ENCODE measurements at regions of chr2 and their contacts with region 1.

Region 1: GRCh38 chr2:65432227-65433190 is at the start of gene SPRED2:
- DNase-seq: peak in 8 of 9 experiments; percentile 37 to 88 (median 64)
- ATAC-seq: peak; percentile 34
- H3K4me3 ChIP-seq: peak within 1 kb of the TSS; percentile 81 to 91
- H3K4me3 Mint-ChIP-seq: peak within 1 kb of the TSS; percentile 88
- H3K27ac ChIP-seq: peak within 1 kb of the TSS in 1 of 2 experiments; percentile 31
- H3K27ac Mint-ChIP-seq: peak within 1 kb of the TSS; percentile 29
- H3K4me1 ChIP-seq: peaks cover 32% of the 10 kb centered on the region
- H3K4me1 Mint-ChIP-seq: peaks cover 22% of the 10 kb centered on the region
- H3K27me3 ChIP-seq: peaks cover 18 to 31% of the 10 kb centered on the region in 2 experiments
- H3K27me3 Mint-ChIP-seq: peaks cover 38% of the 10 kb centered on the region
- CTCF ChIP-seq: no peak
- total RNA-seq, gene SPRED2: 2.3 to 2.5 TPM

Region 2: GRCh38 chr2:63834401-63834800 is 1598.1 kb before region 1 on chr2:
- CTCF ChIA-PET with region 1: no interaction called
- POLR2A ChIA-PET with region 1: no interaction called
- intact Hi-C with region 1: loop called in 1 of 2 experiments (anchors 10 kb)
- DNase-seq: no peak
- ATAC-seq: no peak
- H3K4me3 ChIP-seq: no peak overlapping the region
- H3K4me3 Mint-ChIP-seq: no peak overlapping the region
- H3K27ac ChIP-seq: no peak overlapping the region
- H3K27ac Mint-ChIP-seq: no peak overlapping the region
- H3K4me1 ChIP-seq: no peaks in the 10 kb centered on the region
- H3K4me1 Mint-ChIP-seq: no peaks in the 10 kb centered on the region
- H3K27me3 ChIP-seq: no peaks in the 10 kb centered on the region
- H3K27me3 Mint-ChIP-seq: peaks cover 2% of the 10 kb centered on the region
- CTCF ChIP-seq: no peak

Region 3: DNA sequence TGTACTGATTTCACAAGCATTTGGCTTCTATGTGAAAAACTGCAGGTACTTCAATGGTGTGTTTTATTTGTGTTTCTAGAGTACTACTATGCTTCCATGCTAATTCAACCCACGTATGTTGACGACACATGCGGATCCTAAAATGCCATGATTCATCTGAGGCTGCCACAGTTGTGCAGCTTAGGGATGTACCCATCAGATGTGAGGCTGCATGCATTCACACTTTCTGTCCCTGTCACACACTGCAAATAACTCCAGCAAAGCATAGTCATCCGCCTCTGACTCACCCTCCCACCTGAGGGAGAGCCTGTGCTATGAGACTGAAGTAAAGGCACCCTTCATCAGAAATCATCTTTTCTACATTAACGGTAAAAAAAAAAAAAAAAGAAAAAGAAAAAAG is 756.6 kb before region 1 on chr2:
- CTCF ChIA-PET with region 1: no interaction called
- POLR2A ChIA-PET with region 1: no interaction called
- intact Hi-C with region 1: no loop called
- DNase-seq: peak in 3 of 9 experiments; percentile 22 to 59 (median 42)
- ATAC-seq: peak; percentile 92
- H3K4me3 ChIP-seq: no peak overlapping the region
- H3K4me3 Mint-ChIP-seq: no peak overlapping the region
- H3K27ac ChIP-seq: no peak overlapping the region
- H3K27ac Mint-ChIP-seq: peak overlapping the region; percentile 37
- H3K4me1 ChIP-seq: peaks cover 25% of the 10 kb centered on the region
- H3K4me1 Mint-ChIP-seq: peaks cover 56% of the 10 kb centered on the region
- H3K27me3 ChIP-seq: no peaks in the 10 kb centered on the region
- H3K27me3 Mint-ChIP-seq: no peaks in the 10 kb centered on the region
- CTCF ChIP-seq: no peak

Region 4: DNA sequence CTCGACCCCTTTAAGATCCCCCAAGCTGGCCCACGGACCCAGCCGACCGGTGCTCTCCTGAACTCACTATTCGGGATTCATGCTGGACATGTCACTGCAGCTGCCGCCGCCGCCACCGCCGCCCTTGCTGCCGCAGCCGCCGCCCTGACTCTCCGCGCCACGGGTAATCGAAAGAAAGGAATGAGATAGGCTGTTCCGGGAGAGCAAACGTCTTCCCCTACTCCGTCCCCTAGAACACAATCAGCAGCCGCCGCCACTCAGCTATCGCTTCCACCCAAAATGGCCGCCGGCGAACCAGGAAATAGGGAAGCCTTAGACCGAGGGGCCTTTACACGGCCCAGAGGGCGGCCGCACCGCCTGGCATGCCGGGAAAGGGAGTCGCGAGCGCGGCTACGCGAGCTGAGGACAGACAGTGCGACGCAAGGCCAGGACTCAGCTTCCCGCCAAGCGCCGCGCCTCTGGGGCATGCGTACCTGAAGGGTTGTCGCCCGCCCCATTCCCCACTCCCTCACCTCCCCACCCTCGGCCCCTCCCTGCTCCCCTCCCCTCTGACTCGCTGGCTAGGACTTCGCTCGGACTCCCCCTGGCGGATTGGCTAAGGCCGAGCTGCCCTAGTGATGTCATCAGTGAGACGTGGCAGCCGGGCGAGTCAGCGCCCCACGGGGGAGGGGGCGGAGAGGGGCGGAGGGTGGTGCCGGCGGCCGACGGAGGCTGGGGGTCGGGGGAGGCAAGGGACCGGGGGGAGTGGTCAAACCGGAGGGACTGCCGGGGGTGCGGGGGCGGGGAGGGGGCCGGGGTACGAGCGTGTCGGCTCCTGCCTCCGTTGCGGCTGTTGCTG is 302.5 kb before region 1 on chr2 and contains the start of gene RAB1A:
- CTCF ChIA-PET with region 1: no interaction called
- POLR2A ChIA-PET with region 1: no interaction called
- intact Hi-C with region 1: loop called (anchors 5 kb)
- DNase-seq: peak; percentile 98 to 100 (median 99)
- ATAC-seq: peak; percentile 94
- H3K4me3 ChIP-seq: peak within 1 kb of the TSS; percentile 87 to 88
- H3K4me3 Mint-ChIP-seq: peak within 1 kb of the TSS; percentile 99
- H3K27ac ChIP-seq: peak within 1 kb of the TSS; percentile 91 to 97
- H3K27ac Mint-ChIP-seq: peak within 1 kb of the TSS; percentile 98
- H3K4me1 ChIP-seq: peaks cover 40% of the 10 kb centered on the region
- H3K4me1 Mint-ChIP-seq: peaks cover 44% of the 10 kb centered on the region
- H3K27me3 ChIP-seq: no peaks in the 10 kb centered on the region
- H3K27me3 Mint-ChIP-seq: no peaks in the 10 kb centered on the region
- CTCF ChIP-seq: no peak
- total RNA-seq, gene RAB1A: 101 to 103 TPM

Region 5: GRCh38 chr2:65264821-65265670 is 167.5 kb before region 1 on chr2:
- CTCF ChIA-PET with region 1: interaction called, 4 read pairs
- POLR2A ChIA-PET with region 1: no interaction called
- intact Hi-C with region 1: loop called in 1 of 2 experiments (anchors 10 kb)
- DNase-seq: peak in 2 of 9 experiments; percentile 55 to 68
- ATAC-seq: no peak
- H3K4me3 ChIP-seq: no peak overlapping the region
- H3K4me3 Mint-ChIP-seq: no peak overlapping the region
- H3K27ac ChIP-seq: no peak overlapping the region
- H3K27ac Mint-ChIP-seq: peak overlapping the region; percentile 66
- H3K4me1 ChIP-seq: no peaks in the 10 kb centered on the region
- H3K4me1 Mint-ChIP-seq: peaks cover 11% of the 10 kb centered on the region
- H3K27me3 ChIP-seq: no peaks in the 10 kb centered on the region
- H3K27me3 Mint-ChIP-seq: no peaks in the 10 kb centered on the region
- CTCF ChIP-seq: peak; percentile 75

Region 6: DNA sequence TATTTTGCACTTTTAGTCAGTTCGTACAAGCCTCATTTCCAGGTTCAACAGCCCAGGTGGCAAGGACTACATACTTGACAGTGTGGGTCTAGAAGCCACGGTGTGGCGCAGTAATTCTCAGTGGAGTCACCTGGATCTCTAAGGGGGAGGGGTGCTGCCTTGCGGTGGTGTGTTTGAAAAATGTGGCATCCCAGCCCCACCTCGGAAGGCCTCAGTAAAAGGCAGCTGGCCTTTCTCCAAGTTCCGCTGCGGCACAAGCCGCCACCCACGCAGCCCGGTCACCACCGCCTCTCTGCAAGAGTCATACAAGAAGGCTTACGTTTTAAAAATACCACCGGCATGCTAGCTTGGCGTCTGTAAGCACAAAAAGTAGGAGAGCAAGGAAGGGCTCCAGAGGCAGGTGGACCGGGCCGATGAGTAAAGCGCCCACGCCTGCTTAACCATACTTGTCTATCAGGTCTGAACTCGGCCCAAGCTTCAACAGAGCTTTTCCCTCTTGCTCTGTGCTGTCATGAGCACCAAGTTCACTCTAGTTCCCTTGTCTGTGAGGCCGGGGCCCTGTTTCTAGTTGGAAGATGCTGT is 49.6 kb before region 1 on chr2:
- CTCF ChIA-PET with region 1: interaction called, 3 read pairs
- POLR2A ChIA-PET with region 1: no interaction called
- intact Hi-C with region 1: loop called (anchors 1 to 2 kb)
- DNase-seq: peak; percentile 43 to 86 (median 77)
- ATAC-seq: peak; percentile 95
- H3K4me3 ChIP-seq: no peak overlapping the region
- H3K4me3 Mint-ChIP-seq: peak overlapping the region; percentile 61
- H3K27ac ChIP-seq: no peak overlapping the region
- H3K27ac Mint-ChIP-seq: peak overlapping the region; percentile 67
- H3K4me1 ChIP-seq: peaks cover 21% of the 10 kb centered on the region
- H3K4me1 Mint-ChIP-seq: peaks cover 29% of the 10 kb centered on the region
- H3K27me3 ChIP-seq: no peaks in the 10 kb centered on the region
- H3K27me3 Mint-ChIP-seq: peaks cover 15% of the 10 kb centered on the region
- CTCF ChIP-seq: peak; percentile 21